ENCODE measurements at regions of chr5 and their contacts with region 1.

Region 1: GRCh38 chr5:116947691-116948528 is 373.3 kb upstream of the SEMA6A start:
- DNase-seq: peak; percentile 51 to 59
- ATAC-seq: peak; percentile 76 to 91 (median 86)
- H3K4me3 ChIP-seq: no peak overlapping the region
- H3K27ac ChIP-seq: no peak overlapping the region
- H3K4me1 ChIP-seq: peaks cover 0 to 8% (median 0%) of the 10 kb centered on the region in 9 donors
- H3K27me3 ChIP-seq: no peaks in the 10 kb centered on the region
- CTCF ChIP-seq: peak; percentile 32 to 81 (median 77)

Region 2: GRCh38 chr5:116574367-116575325 is 373.3 kb before region 1 on chr5 and contains the start of gene SEMA6A:
- intact Hi-C with region 1: loop called in 9 of 10 experiments (anchors 1 to 5 kb)
- DNase-seq: peak; percentile 92 to 93
- ATAC-seq: peak; percentile 86 to 95 (median 89)
- H3K4me3 ChIP-seq: peak within 1 kb of the TSS; percentile 54 to 85 (median 72)
- H3K27ac ChIP-seq: peak within 1 kb of the TSS; percentile 51 to 91 (median 80)
- H3K4me1 ChIP-seq: peaks cover 0 to 61% (median 38%) of the 10 kb centered on the region in 9 donors
- H3K27me3 ChIP-seq: peaks cover 0 to 80% (median 20%) of the 10 kb centered on the region in 7 donors
- CTCF ChIP-seq: peak in 3 of 9 donors; percentile 12 to 27 (median 13)
- total RNA-seq, gene SEMA6A: 2.9 to 11.3 (median 8.3) TPM

Region 3: GRCh38 chr5:116788851-116789403 is 159.0 kb before region 1 on chr5:
- intact Hi-C with region 1: loop called in 1 of 10 experiments (anchors 5 kb)
- DNase-seq: peak in 1 of 2 donors; percentile 63
- ATAC-seq: peak; percentile 89 to 99 (median 96)
- H3K4me3 ChIP-seq: no peak overlapping the region
- H3K27ac ChIP-seq: peak overlapping the region in 7 of 10 donors; percentile 38 to 68 (median 58)
- H3K4me1 ChIP-seq: peaks cover 0 to 18% (median 5%) of the 10 kb centered on the region in 9 donors
- H3K27me3 ChIP-seq: no peaks in the 10 kb centered on the region
- CTCF ChIP-seq: no peak

Region 4: GRCh38 chr5:116806836-116807235 is 141.1 kb before region 1 on chr5:
- intact Hi-C with region 1: loop called in 1 of 10 experiments (anchors 10 kb)
- DNase-seq: no peak
- ATAC-seq: no peak
- H3K4me3 ChIP-seq: no peak overlapping the region
- H3K27ac ChIP-seq: no peak overlapping the region
- H3K4me1 ChIP-seq: peaks cover 0 to 4% (median 0%) of the 10 kb centered on the region in 9 donors
- H3K27me3 ChIP-seq: no peaks in the 10 kb centered on the region
- CTCF ChIP-seq: no peak

Region 5: DNA sequence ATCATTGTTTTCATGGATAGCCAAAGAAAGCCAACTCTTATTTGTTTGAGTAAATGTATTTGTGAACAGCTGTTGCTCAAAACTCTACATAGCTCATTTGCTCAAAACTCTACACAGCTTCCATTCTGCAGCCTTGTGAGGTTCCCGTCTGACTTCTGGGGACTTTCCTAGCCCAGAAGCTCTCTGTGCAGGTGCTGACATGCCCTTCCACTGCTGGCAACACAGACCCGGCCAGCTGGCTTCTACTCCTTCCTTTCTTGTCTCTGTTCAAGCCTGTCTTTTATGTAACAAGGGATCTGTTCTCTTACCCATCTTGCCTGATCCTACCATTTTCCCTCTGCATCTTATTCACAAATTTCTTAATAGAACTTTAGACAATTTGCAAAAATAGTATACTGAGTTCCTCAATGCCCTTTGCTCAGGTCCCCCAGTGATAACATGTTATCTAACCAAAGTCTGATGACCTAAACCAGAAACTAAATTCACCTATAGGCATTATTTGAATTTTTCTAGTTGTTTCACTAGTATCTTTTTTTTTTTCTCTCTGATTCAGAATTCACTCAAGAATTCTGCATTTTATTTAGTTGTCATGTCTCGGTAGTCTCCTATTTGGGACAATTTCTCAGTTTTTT is 183.3 kb after region 1 on chr5:
- intact Hi-C with region 1: loop called in 1 of 10 experiments (anchors 10 kb)
- DNase-seq: no peak
- ATAC-seq: no peak
- H3K4me3 ChIP-seq: no peak overlapping the region
- H3K27ac ChIP-seq: no peak overlapping the region
- H3K4me1 ChIP-seq: peaks cover 0 to 15% (median 0%) of the 10 kb centered on the region in 9 donors
- H3K27me3 ChIP-seq: no peaks in the 10 kb centered on the region
- CTCF ChIP-seq: no peak

Region 6: DNA sequence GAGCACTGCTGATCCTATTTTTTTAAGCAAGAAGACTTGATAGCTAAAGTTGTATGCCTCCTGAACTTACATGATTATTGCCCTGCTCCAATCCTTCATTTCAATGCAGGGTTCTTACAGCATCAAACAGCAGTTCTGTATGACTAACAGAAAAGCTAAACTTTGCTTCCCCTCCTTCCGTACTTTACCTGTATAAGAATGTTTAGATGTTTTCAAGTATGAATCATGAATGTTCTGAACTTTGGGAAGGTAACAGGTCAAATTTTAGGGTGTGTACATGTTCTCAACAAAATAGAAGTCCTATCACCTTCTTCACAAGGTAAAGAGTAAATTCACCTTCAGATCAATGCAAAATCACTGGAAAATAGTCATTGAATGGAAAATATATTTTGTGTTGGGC is 599.3 kb after region 1 on chr5:
- intact Hi-C with region 1: no loop called
- DNase-seq: no peak
- ATAC-seq: no peak
- H3K4me3 ChIP-seq: no peak overlapping the region
- H3K27ac ChIP-seq: no peak overlapping the region
- H3K4me1 ChIP-seq: no peaks in the 10 kb centered on the region
- H3K27me3 ChIP-seq: no peaks in the 10 kb centered on the region
- CTCF ChIP-seq: no peak